ENCODE measurements at regions of chr6 and their contacts with region 1.

Region 1: GRCh38 chr6:4606821-4607704 is 169.1 kb upstream of the CDYL start:
- DNase-seq: peak in 1 of 2 donors; percentile 73
- H3K4me3 ChIP-seq: peak overlapping the region in 1 of 2 donors; percentile 7
- H3K27ac ChIP-seq: peak overlapping the region; percentile 25 to 30
- H3K4me1 ChIP-seq: peaks cover 0 to 46% (median 31%) of the 10 kb centered on the region in 4 donors
- H3K27me3 ChIP-seq: no peaks in the 10 kb centered on the region
- CTCF ChIP-seq: no peak

Region 2: GRCh38 chr6:4358414-4359114 is 248.5 kb before region 1 on chr6:
- intact Hi-C with region 1: loop called (anchors 10 kb)
- DNase-seq: peak; percentile 95 to 99
- H3K4me3 ChIP-seq: peak overlapping the region in 1 of 2 donors; percentile 19
- H3K27ac ChIP-seq: peak overlapping the region; percentile 88 to 89
- H3K4me1 ChIP-seq: peaks cover 3 to 22% (median 12%) of the 10 kb centered on the region in 4 donors
- H3K27me3 ChIP-seq: no peaks in the 10 kb centered on the region
- CTCF ChIP-seq: no peak

Region 3: GRCh38 chr6:4441981-4442440 is 165.1 kb before region 1 on chr6:
- intact Hi-C with region 1: no loop called
- DNase-seq: no peak
- H3K4me3 ChIP-seq: no peak overlapping the region
- H3K27ac ChIP-seq: no peak overlapping the region
- H3K4me1 ChIP-seq: no peaks in the 10 kb centered on the region
- H3K27me3 ChIP-seq: no peaks in the 10 kb centered on the region
- CTCF ChIP-seq: no peak

Region 4: GRCh38 chr6:5214570-5215052 is 607.5 kb after region 1 on chr6:
- intact Hi-C with region 1: loop called (anchors 10 kb)
- DNase-seq: peak in 1 of 2 donors; percentile 79
- H3K4me3 ChIP-seq: no peak overlapping the region
- H3K27ac ChIP-seq: peak overlapping the region in 1 of 2 donors; percentile 14
- H3K4me1 ChIP-seq: peaks cover 0 to 51% (median 20%) of the 10 kb centered on the region in 4 donors
- H3K27me3 ChIP-seq: no peaks in the 10 kb centered on the region
- CTCF ChIP-seq: peak; percentile 72 to 83

Measured in tibial artery (tissue), 4 donors.